ENCODE measurements at regions of chr11 and their contacts with region 1.

Region 1: GRCh38 chr11:33412241-33412640 is 155.1 kb downstream of the HIPK3 start:
- DNase-seq: no peak
- ATAC-seq: no peak
- H3K4me3 ChIP-seq: no peak overlapping the region
- H3K4me3 Mint-ChIP-seq: no peak overlapping the region
- H3K27ac ChIP-seq: no peak overlapping the region
- H3K27ac Mint-ChIP-seq: no peak overlapping the region
- H3K4me1 ChIP-seq: no peaks in the 10 kb centered on the region
- H3K4me1 Mint-ChIP-seq: no peaks in the 10 kb centered on the region
- H3K27me3 ChIP-seq: peaks cover 7 to 10% of the 10 kb centered on the region in 2 experiments
- H3K27me3 Mint-ChIP-seq: peaks cover 21% of the 10 kb centered on the region in 2 donors

Region 2: DNA sequence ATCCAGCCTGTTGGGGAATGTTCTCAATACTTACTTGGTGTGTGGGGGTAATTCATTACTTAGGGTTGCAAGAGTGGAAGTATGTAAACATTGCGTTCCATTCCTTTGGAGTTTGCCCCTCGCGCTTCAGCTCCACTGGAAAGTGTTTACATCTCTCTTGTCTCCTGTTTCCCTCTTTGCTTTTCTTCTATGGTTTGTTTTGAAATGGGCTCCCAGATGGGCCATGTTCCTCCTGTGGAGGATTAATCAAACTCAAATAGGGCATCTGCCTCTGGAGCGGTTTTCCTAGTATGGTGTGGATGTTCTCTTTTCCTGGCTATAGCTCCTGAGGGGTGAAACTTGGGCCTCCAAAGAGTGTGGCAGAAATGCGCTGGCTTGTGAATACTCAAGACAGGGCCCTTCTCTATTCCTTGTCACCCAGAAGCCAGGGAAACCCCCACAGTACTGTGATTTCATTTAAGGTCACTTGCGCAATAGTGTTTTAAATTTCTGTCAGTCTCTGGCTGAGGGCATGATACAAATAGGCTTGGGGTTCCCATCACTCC is 1778.6 kb after region 1 on chr11:
- CTCF ChIA-PET with region 1: interaction called in 1 of 2 experiments, 12 read pairs
- POLR2A ChIA-PET with region 1: no interaction called
- DNase-seq: no peak
- ATAC-seq: peak in 1 of 4 experiments; percentile 10
- H3K4me3 ChIP-seq: no peak overlapping the region
- H3K4me3 Mint-ChIP-seq: peak overlapping the region in 1 of 3 donors; percentile 9
- H3K27ac ChIP-seq: no peak overlapping the region
- H3K27ac Mint-ChIP-seq: peak overlapping the region; percentile 60 to 84
- H3K4me1 ChIP-seq: peaks cover 22 to 23% of the 10 kb centered on the region in 2 experiments
- H3K4me1 Mint-ChIP-seq: peaks cover 76 to 94% (median 87%) of the 10 kb centered on the region in 3 donors
- H3K27me3 ChIP-seq: no peaks in the 10 kb centered on the region
- H3K27me3 Mint-ChIP-seq: no peaks in the 10 kb centered on the region

Measured in T-cell (primary cell).